CD8-positive, alpha-beta T cell (primary cell): ENCODE measurements at regions of chr14 and their contacts with region 1.

Region 1: GRCh38 chr14:102591889-102592763 is at the start of gene RCOR1:
- DNase-seq: peak; percentile 96 to 99 (median 98)
- ATAC-seq: peak; percentile 89
- H3K4me3 ChIP-seq: peak within 1 kb of the TSS; percentile 59 to 94
- H3K4me3 Mint-ChIP-seq: peak within 1 kb of the TSS; percentile 89
- H3K27ac ChIP-seq: peak within 1 kb of the TSS; percentile 89 to 91
- H3K27ac Mint-ChIP-seq: peak within 1 kb of the TSS; percentile 94
- H3K4me1 ChIP-seq: peaks cover 18% of the 10 kb centered on the region
- H3K4me1 Mint-ChIP-seq: peaks cover 30% of the 10 kb centered on the region
- H3K27me3 ChIP-seq: no peaks in the 10 kb centered on the region
- H3K27me3 Mint-ChIP-seq: no peaks in the 10 kb centered on the region
- CTCF ChIP-seq: no peak
- total RNA-seq, gene RCOR1: 31.7 to 34.4 TPM

Region 2: GRCh38 chr14:102316743-102317563 is 275.2 kb before region 1 on chr14:
- CTCF ChIA-PET with region 1: no interaction called
- POLR2A ChIA-PET with region 1: interaction called, 3 read pairs
- intact Hi-C with region 1: loop called in 1 of 2 experiments (anchors 2 kb)
- DNase-seq: peak; percentile 86 to 100 (median 95)
- ATAC-seq: peak; percentile 55
- H3K4me3 ChIP-seq: peak overlapping the region; percentile 57 to 74
- H3K4me3 Mint-ChIP-seq: peak overlapping the region; percentile 93
- H3K27ac ChIP-seq: peak overlapping the region; percentile 42 to 73
- H3K27ac Mint-ChIP-seq: peak overlapping the region; percentile 94
- H3K4me1 ChIP-seq: peaks cover 42% of the 10 kb centered on the region
- H3K4me1 Mint-ChIP-seq: peaks cover 59% of the 10 kb centered on the region
- H3K27me3 ChIP-seq: no peaks in the 10 kb centered on the region
- H3K27me3 Mint-ChIP-seq: no peaks in the 10 kb centered on the region
- CTCF ChIP-seq: peak; percentile 82

Region 3: DNA sequence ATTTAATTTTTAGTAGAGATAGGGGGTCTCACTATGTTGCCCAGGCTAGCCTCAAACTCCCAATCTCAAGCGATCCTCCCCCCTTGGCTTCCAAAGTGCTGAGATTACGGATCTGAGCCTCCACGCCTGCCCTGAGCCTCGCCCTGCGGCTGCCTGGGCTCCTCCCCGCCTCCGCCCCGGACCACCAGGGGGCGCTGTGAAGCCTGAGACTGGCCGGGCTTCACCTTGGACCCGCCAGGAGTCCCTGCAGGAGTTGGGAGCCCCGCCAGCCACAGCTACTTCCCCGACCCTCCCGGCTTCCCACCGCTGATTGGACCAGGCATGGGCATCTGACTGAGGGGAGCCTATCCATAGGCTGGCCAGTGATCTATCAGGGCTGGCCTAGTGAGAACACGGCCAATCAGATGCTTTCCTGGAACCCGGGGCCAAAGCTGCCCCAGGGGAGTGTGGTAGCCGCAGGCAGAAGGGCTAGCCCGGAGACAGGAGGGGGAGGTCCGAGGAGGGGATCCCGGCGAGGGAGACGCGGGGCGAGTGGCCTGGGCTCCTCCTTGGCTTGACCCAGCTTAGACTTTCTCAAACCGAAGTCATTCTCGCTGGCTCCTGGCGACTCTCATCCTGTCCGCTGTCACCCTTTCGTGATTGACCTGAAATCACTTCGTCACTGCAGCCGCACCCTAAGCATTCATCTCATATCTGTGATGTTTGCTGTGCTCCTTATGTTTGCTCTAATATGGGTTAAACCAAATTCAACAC is 67.5 kb before region 1 on chr14:
- CTCF ChIA-PET with region 1: interaction called, 6 read pairs
- POLR2A ChIA-PET with region 1: interaction called, 5 read pairs
- intact Hi-C with region 1: loop called (anchors 1 kb)
- DNase-seq: peak; percentile 81 to 97 (median 90)
- ATAC-seq: peak; percentile 79
- H3K4me3 ChIP-seq: peak overlapping the region; percentile 69 to 84
- H3K4me3 Mint-ChIP-seq: peak overlapping the region; percentile 85
- H3K27ac ChIP-seq: peak overlapping the region; percentile 35 to 83
- H3K27ac Mint-ChIP-seq: peak overlapping the region; percentile 61
- H3K4me1 ChIP-seq: peaks cover 20% of the 10 kb centered on the region
- H3K4me1 Mint-ChIP-seq: peaks cover 26% of the 10 kb centered on the region
- H3K27me3 ChIP-seq: no peaks in the 10 kb centered on the region
- H3K27me3 Mint-ChIP-seq: no peaks in the 10 kb centered on the region
- CTCF ChIP-seq: peak; percentile 96

Region 4: GRCh38 chr14:102605025-102605424 is 12.9 kb after region 1 on chr14:
- CTCF ChIA-PET with region 1: interaction called, 13 read pairs
- POLR2A ChIA-PET with region 1: interaction called, 3 read pairs
- intact Hi-C with region 1: no loop called
- DNase-seq: no peak
- ATAC-seq: no peak
- H3K4me3 ChIP-seq: no peak overlapping the region
- H3K4me3 Mint-ChIP-seq: no peak overlapping the region
- H3K27ac ChIP-seq: no peak overlapping the region
- H3K27ac Mint-ChIP-seq: no peak overlapping the region
- H3K4me1 ChIP-seq: peaks cover 9% of the 10 kb centered on the region
- H3K4me1 Mint-ChIP-seq: peaks cover 47% of the 10 kb centered on the region
- H3K27me3 ChIP-seq: no peaks in the 10 kb centered on the region
- H3K27me3 Mint-ChIP-seq: no peaks in the 10 kb centered on the region
- CTCF ChIP-seq: no peak

Region 5: DNA sequence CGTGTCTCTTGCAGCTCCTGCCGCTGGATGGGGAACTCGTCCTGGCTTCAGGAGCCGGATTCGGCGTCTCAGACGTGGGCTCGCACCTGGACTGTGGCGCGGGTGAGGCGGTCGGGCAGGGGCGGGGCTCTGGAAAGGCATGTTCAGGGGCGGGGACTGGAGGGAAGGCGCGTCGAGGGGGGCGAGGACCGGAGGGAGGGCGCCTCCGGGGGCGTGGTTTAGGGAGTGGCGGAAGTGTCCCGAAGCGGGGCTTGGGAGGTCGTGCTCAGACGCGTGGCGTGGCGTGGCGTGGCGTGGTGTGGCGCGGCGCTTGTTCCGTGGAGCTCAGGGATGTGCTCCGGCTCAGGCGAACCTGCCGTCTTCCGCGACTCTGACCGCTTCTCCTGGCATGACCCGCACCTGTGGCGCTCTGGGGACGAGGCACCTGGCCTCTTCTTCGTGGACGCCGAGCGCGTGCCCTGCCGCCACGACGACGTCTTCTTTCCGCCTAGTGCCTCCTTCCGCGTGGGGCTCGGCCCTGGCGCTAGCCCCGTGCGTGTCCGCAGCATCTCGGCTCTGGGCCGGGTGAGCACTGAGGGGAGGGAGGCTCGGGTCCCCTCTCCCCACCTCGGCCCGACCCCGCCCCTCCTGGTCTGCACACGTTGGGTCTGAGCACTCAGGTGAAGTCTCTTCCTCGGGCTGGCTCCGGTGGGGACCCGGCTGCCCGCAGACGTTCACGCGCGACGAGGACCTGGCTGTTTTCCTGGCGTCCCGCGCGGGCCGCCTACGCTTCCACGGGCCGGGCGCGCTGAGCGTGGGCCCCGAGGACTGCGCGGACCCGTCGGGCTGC is 336.5 kb after region 1 on chr14:
- CTCF ChIA-PET with region 1: no interaction called
- POLR2A ChIA-PET with region 1: no interaction called
- intact Hi-C with region 1: loop called in 1 of 2 experiments (anchors 1 kb)
- DNase-seq: peak; percentile 55 to 90 (median 87)
- ATAC-seq: peak; percentile 94
- H3K4me3 ChIP-seq: peak overlapping the region; percentile 51 to 70
- H3K4me3 Mint-ChIP-seq: peak overlapping the region; percentile 79
- H3K27ac ChIP-seq: no peak overlapping the region
- H3K27ac Mint-ChIP-seq: peak overlapping the region; percentile 10
- H3K4me1 ChIP-seq: peaks cover 30% of the 10 kb centered on the region
- H3K4me1 Mint-ChIP-seq: peaks cover 13% of the 10 kb centered on the region
- H3K27me3 ChIP-seq: peaks cover 8 to 24% of the 10 kb centered on the region in 2 experiments
- H3K27me3 Mint-ChIP-seq: peaks cover 13% of the 10 kb centered on the region
- CTCF ChIP-seq: no peak

Region 6: GRCh38 chr14:103562429-103563225 is 970.5 kb after region 1 on chr14 and contains the starts of genes BAG5 and COA8:
- CTCF ChIA-PET with region 1: no interaction called
- POLR2A ChIA-PET with region 1: no interaction called
- intact Hi-C with region 1: loop called in 1 of 2 experiments (anchors 5 kb)
- DNase-seq: peak; percentile 68 to 92 (median 86)
- ATAC-seq: peak; percentile 81
- H3K4me3 ChIP-seq: peak within 1 kb of the TSS; percentile 96 to 97
- H3K4me3 Mint-ChIP-seq: peak within 1 kb of the TSS; percentile 83
- H3K27ac ChIP-seq: peak within 1 kb of the TSS; percentile 81 to 86
- H3K27ac Mint-ChIP-seq: peak within 1 kb of the TSS; percentile 87
- H3K4me1 ChIP-seq: peaks cover 46% of the 10 kb centered on the region
- H3K4me1 Mint-ChIP-seq: peaks cover 62% of the 10 kb centered on the region
- H3K27me3 ChIP-seq: no peaks in the 10 kb centered on the region
- H3K27me3 Mint-ChIP-seq: no peaks in the 10 kb centered on the region
- CTCF ChIP-seq: no peak
- total RNA-seq, gene BAG5: 46.2 to 46.3 TPM
- total RNA-seq, gene COA8: 11.6 to 13.4 TPM